ENCODE measurements at regions of chr15 and their contacts with region 1.

Region 1: GRCh38 chr15:75208501-75209288 is 7.0 kb downstream of the C15orf39 start:
- DNase-seq: no peak
- H3K4me3 Mint-ChIP-seq: no peak overlapping the region
- H3K27ac Mint-ChIP-seq: no peak overlapping the region
- H3K4me1 Mint-ChIP-seq: peaks cover 22% of the 10 kb centered on the region
- H3K27me3 Mint-ChIP-seq: no peaks in the 10 kb centered on the region

Region 2: DNA sequence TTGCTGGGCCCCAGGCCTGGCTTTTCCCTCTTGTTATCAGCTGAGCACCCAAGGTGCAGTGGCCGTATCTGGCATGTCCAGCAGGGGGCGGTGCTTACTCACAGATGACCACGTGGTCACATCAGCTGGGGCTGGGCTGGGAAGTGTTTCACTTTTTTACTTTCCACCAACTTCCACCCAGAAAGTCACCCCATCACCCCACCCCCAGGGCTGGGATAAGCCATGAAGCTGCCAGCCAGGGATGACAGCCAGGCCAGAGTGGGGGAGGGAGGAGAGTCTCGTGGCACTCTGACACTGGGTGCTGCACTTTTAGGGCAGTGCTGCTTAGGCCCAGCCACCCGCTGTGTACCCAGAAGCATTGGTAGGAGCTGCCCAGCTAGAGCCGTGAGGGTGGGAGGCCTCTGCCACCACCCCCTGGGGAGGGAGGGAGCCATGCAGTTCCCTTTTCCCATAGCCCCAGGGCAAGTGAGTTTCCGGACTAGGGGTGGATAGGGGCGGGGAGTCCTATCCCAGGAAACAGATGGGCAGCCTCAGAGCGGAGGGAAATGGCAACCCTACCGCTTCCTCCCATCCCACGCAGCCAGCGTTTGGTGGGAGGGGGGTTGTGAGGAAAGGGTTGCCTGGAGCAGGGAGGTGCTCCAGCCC is 179.2 kb before region 1 on chr15:
- CTCF ChIA-PET with region 1: interaction called, 89 read pairs
- POLR2A ChIA-PET with region 1: interaction called, 10 read pairs
- intact Hi-C with region 1: loop called (anchors 1 kb)
- DNase-seq: peak; percentile 91
- H3K4me3 Mint-ChIP-seq: no peak overlapping the region
- H3K27ac Mint-ChIP-seq: no peak overlapping the region
- H3K4me1 Mint-ChIP-seq: peaks cover 19% of the 10 kb centered on the region
- H3K27me3 Mint-ChIP-seq: no peaks in the 10 kb centered on the region